ENCODE measurements at regions of chr9 and their contacts with region 1.

Region 1: GRCh38 chr9:27548055-27548741 is 18.6 kb upstream of the MOB3B start:
- DNase-seq: peak; percentile 59
- H3K4me3 Mint-ChIP-seq: no peak overlapping the region
- H3K27ac Mint-ChIP-seq: peak overlapping the region; percentile 54
- H3K4me1 Mint-ChIP-seq: no peaks in the 10 kb centered on the region
- H3K27me3 Mint-ChIP-seq: no peaks in the 10 kb centered on the region
- CTCF ChIP-seq: peak; percentile 48

Region 2: DNA sequence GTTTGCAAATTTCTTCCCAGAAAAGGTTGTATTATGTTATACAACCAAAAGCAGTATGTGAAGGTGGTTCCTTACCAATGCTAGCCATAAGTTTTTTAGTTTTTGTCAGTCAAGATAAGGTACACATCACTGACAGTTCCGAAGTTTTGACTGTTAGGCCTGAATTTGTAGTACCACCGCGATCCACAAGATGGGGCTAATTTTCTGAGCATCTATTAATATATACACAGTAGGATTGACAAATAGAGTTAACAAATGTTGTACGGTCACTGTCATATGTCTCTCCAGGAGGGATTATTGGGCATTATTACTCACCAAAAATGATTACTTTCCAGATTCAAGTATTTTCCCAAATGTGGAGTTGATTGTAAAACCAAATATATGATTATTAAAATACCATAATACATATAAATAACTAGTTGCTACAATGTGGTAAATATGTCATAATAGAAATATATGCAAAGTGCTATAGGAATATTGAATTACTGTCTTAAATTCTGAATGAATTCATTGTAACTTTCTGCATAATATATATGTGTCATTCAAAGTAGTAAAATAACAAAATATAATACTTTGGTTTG is 514.3 kb before region 1 on chr9:
- CTCF ChIA-PET with region 1: interaction called, 4 read pairs
- POLR2A ChIA-PET with region 1: no interaction called
- intact Hi-C with region 1: loop called (anchors 5 kb)
- DNase-seq: peak; percentile 71
- H3K4me3 Mint-ChIP-seq: no peak overlapping the region
- H3K27ac Mint-ChIP-seq: no peak overlapping the region
- H3K4me1 Mint-ChIP-seq: peaks cover 6% of the 10 kb centered on the region
- H3K27me3 Mint-ChIP-seq: no peaks in the 10 kb centered on the region
- CTCF ChIP-seq: peak; percentile 64

Region 3: GRCh38 chr9:27340961-27341511 is 207.2 kb before region 1 on chr9:
- CTCF ChIA-PET with region 1: interaction called, 11 read pairs
- POLR2A ChIA-PET with region 1: no interaction called
- intact Hi-C with region 1: no loop called
- DNase-seq: no peak
- H3K4me3 Mint-ChIP-seq: no peak overlapping the region
- H3K27ac Mint-ChIP-seq: no peak overlapping the region
- H3K4me1 Mint-ChIP-seq: peaks cover 13% of the 10 kb centered on the region
- H3K27me3 Mint-ChIP-seq: no peaks in the 10 kb centered on the region
- CTCF ChIP-seq: no peak

Region 4: DNA sequence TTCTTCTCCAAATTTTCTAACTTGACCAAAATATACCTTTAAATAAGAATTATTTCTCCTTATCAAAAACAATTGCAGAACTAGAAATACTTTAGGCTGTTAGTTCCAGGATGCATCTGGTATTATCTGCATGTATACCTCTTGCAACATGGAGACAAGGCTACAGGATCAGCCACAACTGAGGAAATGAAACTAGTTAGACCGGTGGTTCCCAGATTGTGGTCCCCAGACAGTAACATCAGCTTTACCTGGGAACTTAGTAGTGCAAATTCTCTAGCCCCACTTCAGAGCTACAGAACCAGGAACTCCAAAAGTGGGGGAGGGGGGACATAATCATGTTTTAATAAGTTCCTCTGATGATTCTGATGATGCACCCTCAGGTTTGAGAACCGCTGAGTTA is 86.7 kb after region 1 on chr9:
- CTCF ChIA-PET with region 1: no interaction called
- POLR2A ChIA-PET with region 1: no interaction called
- intact Hi-C with region 1: no loop called
- DNase-seq: no peak
- H3K4me3 Mint-ChIP-seq: no peak overlapping the region
- H3K27ac Mint-ChIP-seq: no peak overlapping the region
- H3K4me1 Mint-ChIP-seq: peaks cover 6% of the 10 kb centered on the region
- H3K27me3 Mint-ChIP-seq: no peaks in the 10 kb centered on the region
- CTCF ChIP-seq: no peak

Measured in MCF 10A (cell line).